ENCODE measurements at regions of chr6 and their contacts with region 1.

Region 1: GRCh38 chr6:26249957-26250697 is 114.9 kb upstream of the BTN3A2 start:
- DNase-seq: peak; percentile 74
- ATAC-seq: peak; percentile 53
- H3K4me3 Mint-ChIP-seq: peak overlapping the region; percentile 96
- H3K27ac Mint-ChIP-seq: peak overlapping the region; percentile 98
- H3K4me1 Mint-ChIP-seq: peaks cover 27% of the 10 kb centered on the region
- H3K27me3 Mint-ChIP-seq: no peaks in the 10 kb centered on the region
- CTCF ChIP-seq: no peak

Region 2: DNA sequence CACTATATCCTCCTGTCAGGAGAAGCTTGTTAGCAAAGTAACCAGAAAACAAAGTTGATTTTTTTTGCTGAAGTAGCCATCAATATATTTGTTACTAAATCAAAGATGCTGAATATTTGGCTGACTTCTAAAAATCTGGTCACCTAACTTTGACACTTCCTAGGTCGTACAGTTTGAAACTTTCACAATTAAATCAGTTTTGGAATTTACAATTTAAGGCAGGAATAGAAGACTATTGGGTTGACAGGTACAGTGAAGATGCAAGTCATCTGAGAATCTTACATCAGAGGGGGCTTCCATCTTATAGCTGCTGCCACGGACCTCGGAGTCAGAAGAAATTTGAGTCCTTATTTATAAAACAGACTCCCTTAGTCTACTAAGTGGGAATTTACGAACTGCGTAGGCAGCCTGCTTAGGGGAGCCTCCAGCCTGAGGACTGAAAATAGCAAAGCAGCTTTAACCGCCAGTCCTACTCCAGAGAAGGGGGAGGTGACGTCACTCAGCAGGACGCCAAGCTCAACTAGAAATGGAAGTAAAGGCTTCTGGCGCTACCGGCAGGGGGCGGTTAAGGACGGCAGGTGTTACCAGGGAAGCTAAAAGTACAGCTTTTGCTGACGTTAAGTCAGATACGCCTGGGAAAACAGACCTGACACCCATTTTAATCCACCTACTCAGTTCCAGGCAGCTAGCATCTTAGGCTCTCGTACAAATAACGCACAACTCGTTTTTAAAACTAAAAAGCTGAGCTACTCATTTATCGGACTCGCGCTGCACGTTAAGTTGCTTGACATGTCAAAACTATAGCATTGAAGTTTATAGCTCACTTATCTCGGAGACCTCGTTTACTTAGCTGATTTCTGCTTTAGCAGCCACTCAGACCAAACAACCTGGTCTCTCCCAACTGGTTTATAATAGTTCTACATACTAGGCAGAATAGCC is 224.0 kb before region 1 on chr6:
- CTCF ChIA-PET with region 1: no interaction called
- POLR2A ChIA-PET with region 1: interaction called, 33 read pairs
- DNase-seq: peak; percentile 95
- ATAC-seq: peak; percentile 12
- H3K4me3 Mint-ChIP-seq: peak overlapping the region; percentile 92
- H3K27ac Mint-ChIP-seq: peak overlapping the region; percentile 98
- H3K4me1 Mint-ChIP-seq: peaks cover 73% of the 10 kb centered on the region
- H3K27me3 Mint-ChIP-seq: no peaks in the 10 kb centered on the region
- CTCF ChIP-seq: peak; percentile 60

Region 3: GRCh38 chr6:26045065-26045927 is 204.8 kb before region 1 on chr6:
- CTCF ChIA-PET with region 1: no interaction called
- POLR2A ChIA-PET with region 1: interaction called, 11 read pairs
- DNase-seq: peak; percentile 43
- ATAC-seq: peak; percentile 22; the same call in 1 of the 2 replicates
- H3K4me3 Mint-ChIP-seq: peak overlapping the region; percentile 64
- H3K27ac Mint-ChIP-seq: peak overlapping the region; percentile 95
- H3K4me1 Mint-ChIP-seq: peaks cover 42% of the 10 kb centered on the region
- H3K27me3 Mint-ChIP-seq: no peaks in the 10 kb centered on the region
- CTCF ChIP-seq: no peak

Region 4: GRCh38 chr6:26204332-26205165 is 45.6 kb before region 1 on chr6:
- CTCF ChIA-PET with region 1: no interaction called
- POLR2A ChIA-PET with region 1: interaction called, 84 read pairs
- DNase-seq: peak; percentile 90
- ATAC-seq: peak; percentile 58
- H3K4me3 Mint-ChIP-seq: no peak overlapping the region
- H3K27ac Mint-ChIP-seq: no peak overlapping the region
- H3K4me1 Mint-ChIP-seq: peaks cover 22% of the 10 kb centered on the region
- H3K27me3 Mint-ChIP-seq: no peaks in the 10 kb centered on the region
- CTCF ChIP-seq: no peak

Region 5: GRCh38 chr6:27132532-27133280 is 882.6 kb after region 1 on chr6:
- CTCF ChIA-PET with region 1: no interaction called
- POLR2A ChIA-PET with region 1: interaction called, 31 read pairs
- DNase-seq: peak; percentile 85
- ATAC-seq: peak; percentile 86
- H3K4me3 Mint-ChIP-seq: no peak overlapping the region
- H3K27ac Mint-ChIP-seq: no peak overlapping the region
- H3K4me1 Mint-ChIP-seq: peaks cover 65% of the 10 kb centered on the region
- H3K27me3 Mint-ChIP-seq: no peaks in the 10 kb centered on the region
- CTCF ChIP-seq: no peak

Region 6: GRCh38 chr6:27809939-27810767 is 1560.0 kb after region 1 on chr6:
- CTCF ChIA-PET with region 1: no interaction called
- POLR2A ChIA-PET with region 1: interaction called, 33 read pairs
- DNase-seq: peak; percentile 58
- ATAC-seq: peak; percentile 7
- H3K4me3 Mint-ChIP-seq: peak overlapping the region; percentile 98
- H3K27ac Mint-ChIP-seq: peak overlapping the region; percentile 98
- H3K4me1 Mint-ChIP-seq: peaks cover 45% of the 10 kb centered on the region
- H3K27me3 Mint-ChIP-seq: peaks cover 3% of the 10 kb centered on the region
- CTCF ChIP-seq: no peak

Region 7: DNA sequence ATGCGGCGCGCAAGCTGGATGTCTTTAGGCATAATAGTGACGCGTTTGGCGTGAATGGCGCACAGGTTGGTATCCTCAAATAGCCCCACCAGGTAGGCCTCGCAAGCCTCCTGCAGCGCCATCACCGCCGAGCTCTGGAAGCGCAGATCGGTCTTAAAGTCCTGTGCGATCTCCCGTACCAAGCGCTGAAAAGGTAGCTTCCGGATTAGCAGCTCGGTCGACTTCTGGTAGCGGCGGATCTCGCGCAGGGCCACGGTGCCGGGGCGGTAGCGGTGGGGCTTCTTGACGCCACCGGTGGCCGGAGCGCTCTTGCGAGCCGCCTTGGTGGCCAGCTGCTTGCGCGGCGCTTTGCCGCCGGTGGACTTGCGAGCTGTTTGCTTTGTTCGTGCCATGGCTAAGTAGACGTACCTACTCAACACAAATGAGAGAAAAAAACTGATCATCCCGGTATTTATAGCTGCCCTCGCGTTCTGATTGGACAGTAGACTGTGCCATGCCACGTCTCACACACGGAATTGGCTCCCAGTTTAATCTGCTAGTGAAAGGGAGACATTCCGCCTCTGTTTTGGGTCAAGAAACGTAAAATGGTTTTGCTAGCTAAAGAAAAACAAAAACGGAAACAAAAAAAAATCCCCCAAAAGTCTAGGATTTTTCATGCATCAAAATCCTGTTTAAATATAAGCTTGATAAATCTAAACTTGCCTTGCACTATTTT is 1622.0 kb after region 1 on chr6:
- CTCF ChIA-PET with region 1: no interaction called
- POLR2A ChIA-PET with region 1: interaction called, 21 read pairs
- DNase-seq: peak; percentile 79
- ATAC-seq: peak; percentile 58
- H3K4me3 Mint-ChIP-seq: peak overlapping the region; percentile 94
- H3K27ac Mint-ChIP-seq: peak overlapping the region; percentile 99
- H3K4me1 Mint-ChIP-seq: peaks cover 50% of the 10 kb centered on the region
- H3K27me3 Mint-ChIP-seq: no peaks in the 10 kb centered on the region
- CTCF ChIP-seq: no peak

Measured in WTC11 (cell line).